GM12878 (cell line): ENCODE measurements at regions of chr7 and their contacts with region 1.

Region 1: DNA sequence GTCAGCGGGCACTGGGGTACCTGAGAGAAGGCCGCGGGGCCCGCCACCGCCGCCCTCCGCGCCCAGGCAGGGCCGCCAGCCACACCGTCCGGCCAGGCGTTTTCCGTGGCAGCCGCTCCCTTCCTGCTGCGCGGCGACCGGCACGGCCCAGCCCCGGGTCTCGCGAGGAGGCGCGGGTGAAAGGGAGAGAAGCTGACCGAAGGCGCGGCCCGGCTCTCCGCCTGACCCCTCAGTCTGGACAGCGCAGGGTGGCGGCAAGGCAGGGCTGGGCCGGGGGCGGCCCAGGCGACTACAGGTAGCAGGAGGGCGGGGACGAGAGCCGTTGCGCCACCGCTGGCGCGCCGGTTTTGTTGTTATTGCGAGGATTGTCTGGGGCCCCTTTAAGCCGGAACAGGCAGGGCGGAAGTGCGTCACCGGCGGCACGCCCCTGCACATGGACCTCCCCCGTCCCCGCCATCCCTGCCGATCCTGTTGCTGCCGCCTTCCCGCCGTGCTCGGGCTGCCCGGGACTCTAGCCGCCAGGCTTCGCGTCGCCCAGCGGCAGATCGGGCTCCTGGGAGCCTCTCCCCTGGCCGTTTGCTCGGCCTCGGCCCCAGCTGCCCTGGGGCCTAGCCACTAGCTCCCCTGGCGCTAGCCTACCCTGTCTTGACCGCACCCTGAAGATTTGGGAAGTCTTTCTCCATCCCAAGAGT is at the start of gene HERPUD2:
- DNase-seq: peak; percentile 71
- ATAC-seq: peak; percentile 86
- H3K4me3 ChIP-seq: peak within 1 kb of the TSS; percentile 94
- H3K27ac ChIP-seq: peak within 1 kb of the TSS; percentile 91
- H3K4me1 ChIP-seq: no peaks in the 10 kb centered on the region
- H3K27me3 ChIP-seq: no peaks in the 10 kb centered on the region
- CTCF ChIP-seq: no peak; a peak in 1 of 6 replicates
- EP300 ChIP-seq: 0 out of 4 replicates have a peak, but pooled peaks of 1 of the 2 experiments have one; percentile 10
- POLR2A ChIP-seq: peak; percentile 93
- RAD21 ChIP-seq: no peak
- polyA plus RNA-seq, gene HERPUD2: 4.7 to 6.8 TPM

Region 2: GRCh38 chr7:35647171-35647574 is 47.8 kb before region 1 on chr7:
- CTCF ChIA-PET with region 1: no interaction called
- POLR2A ChIA-PET with region 1: no interaction called
- RAD21 ChIA-PET with region 1: interaction called, 3 read pairs
- SMC1A ChIA-PET with region 1: interaction called, 7 read pairs
- in situ Hi-C with region 1: no loop called
- intact Hi-C with region 1: loop called (anchors 5 kb)
- DNase-seq: no peak
- ATAC-seq: peak; percentile 65
- H3K4me3 ChIP-seq: no peak overlapping the region
- H3K27ac ChIP-seq: peak overlapping the region; percentile 58
- H3K4me1 ChIP-seq: peaks cover 22% of the 10 kb centered on the region
- H3K27me3 ChIP-seq: no peaks in the 10 kb centered on the region
- CTCF ChIP-seq: no peak
- EP300 ChIP-seq: no peak
- POLR2A ChIP-seq: no peak
- RAD21 ChIP-seq: no peak

Region 3: GRCh38 chr7:35707422-35707821 is 12.5 kb after region 1 on chr7:
- CTCF ChIA-PET with region 1: interaction called, 26 read pairs
- POLR2A ChIA-PET with region 1: interaction called, 17 read pairs
- RAD21 ChIA-PET with region 1: interaction called, 24 read pairs
- SMC1A ChIA-PET with region 1: interaction called, 157 read pairs
- in situ Hi-C with region 1: no loop called
- intact Hi-C with region 1: no loop called
- DNase-seq: no peak
- ATAC-seq: no peak
- H3K4me3 ChIP-seq: no peak overlapping the region
- H3K27ac ChIP-seq: no peak overlapping the region
- H3K4me1 ChIP-seq: peaks cover 5% of the 10 kb centered on the region; the same call in 1 of the 2 replicates
- H3K27me3 ChIP-seq: no peaks in the 10 kb centered on the region
- CTCF ChIP-seq: no peak
- EP300 ChIP-seq: no peak
- POLR2A ChIP-seq: no peak
- RAD21 ChIP-seq: no peak

Region 4: GRCh38 chr7:35716038-35716803 is 21.3 kb after region 1 on chr7:
- CTCF ChIA-PET with region 1: interaction called, 26 read pairs
- POLR2A ChIA-PET with region 1: interaction called, 4 read pairs
- RAD21 ChIA-PET with region 1: interaction called, 3 read pairs
- SMC1A ChIA-PET with region 1: interaction called, 157 read pairs
- in situ Hi-C with region 1: no loop called
- intact Hi-C with region 1: no loop called
- DNase-seq: no peak
- ATAC-seq: no peak
- H3K4me3 ChIP-seq: no peak overlapping the region
- H3K27ac ChIP-seq: no peak overlapping the region
- H3K4me1 ChIP-seq: peaks cover 7% of the 10 kb centered on the region
- H3K27me3 ChIP-seq: no peaks in the 10 kb centered on the region
- CTCF ChIP-seq: no peak
- EP300 ChIP-seq: no peak
- POLR2A ChIP-seq: no peak
- RAD21 ChIP-seq: no peak

Region 5: GRCh38 chr7:35777121-35777520 is 82.2 kb after region 1 on chr7:
- CTCF ChIA-PET with region 1: no interaction called
- POLR2A ChIA-PET with region 1: no interaction called
- RAD21 ChIA-PET with region 1: no interaction called
- SMC1A ChIA-PET with region 1: no interaction called
- in situ Hi-C with region 1: no loop called
- intact Hi-C with region 1: no loop called
- DNase-seq: no peak
- ATAC-seq: no peak
- H3K4me3 ChIP-seq: no peak overlapping the region
- H3K27ac ChIP-seq: no peak overlapping the region
- H3K4me1 ChIP-seq: no peaks in the 10 kb centered on the region
- H3K27me3 ChIP-seq: no peaks in the 10 kb centered on the region
- CTCF ChIP-seq: no peak
- EP300 ChIP-seq: no peak
- POLR2A ChIP-seq: no peak
- RAD21 ChIP-seq: no peak

Region 6: DNA sequence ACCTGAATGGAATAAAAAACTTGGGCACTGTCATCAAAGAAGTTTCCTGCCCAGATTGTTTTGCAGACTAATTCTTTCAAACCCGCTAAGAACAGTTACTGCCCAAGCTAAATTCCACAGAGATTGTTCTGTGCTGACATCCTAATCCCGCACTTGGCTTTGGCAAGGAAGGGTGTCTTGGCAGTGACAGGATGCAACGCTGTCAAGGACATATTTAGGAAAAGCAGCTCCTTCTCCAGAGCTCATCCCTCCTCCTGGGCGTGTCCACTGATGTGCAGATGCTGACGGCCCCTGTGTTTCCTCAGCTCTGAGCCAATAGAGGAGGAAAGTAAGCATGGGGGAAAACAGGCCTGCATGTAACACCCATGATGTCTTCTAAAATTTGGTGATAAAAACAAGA is 532.3 kb after region 1 on chr7:
- CTCF ChIA-PET with region 1: no interaction called
- POLR2A ChIA-PET with region 1: no interaction called
- RAD21 ChIA-PET with region 1: no interaction called
- SMC1A ChIA-PET with region 1: no interaction called
- in situ Hi-C with region 1: no loop called
- intact Hi-C with region 1: no loop called
- DNase-seq: no peak
- ATAC-seq: no peak
- H3K4me3 ChIP-seq: no peak overlapping the region
- H3K27ac ChIP-seq: no peak overlapping the region
- H3K4me1 ChIP-seq: no peaks in the 10 kb centered on the region
- H3K27me3 ChIP-seq: no peaks in the 10 kb centered on the region; a peak in 1 of 4 replicates
- CTCF ChIP-seq: no peak
- EP300 ChIP-seq: no peak
- POLR2A ChIP-seq: no peak
- RAD21 ChIP-seq: no peak